ENCODE measurements at regions of chr1 and their contacts with region 1.

Region 1: DNA sequence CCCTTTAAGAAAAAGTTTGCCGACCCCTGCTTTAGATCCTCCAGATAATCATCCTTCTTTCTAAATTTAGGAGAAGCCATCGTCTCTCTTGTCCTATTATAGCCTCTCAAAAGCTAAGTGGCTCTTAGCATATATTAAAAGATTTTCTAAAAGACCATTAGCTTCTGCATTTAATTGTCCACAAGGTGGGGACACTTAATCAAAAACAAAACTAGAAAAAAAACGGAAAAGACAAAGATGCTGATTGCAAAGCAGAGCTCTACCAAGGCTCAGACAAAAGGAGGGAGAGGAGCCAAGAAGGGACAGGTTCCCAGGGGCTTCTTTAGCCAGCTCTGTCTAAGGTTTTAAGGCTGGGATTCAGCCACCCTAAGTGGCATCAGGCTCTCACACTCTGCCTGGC is 128.3 kb upstream of the HMGB4 start:
- DNase-seq: no peak
- H3K4me3 ChIP-seq: no peak overlapping the region
- H3K27me3 ChIP-seq: no peaks in the 10 kb centered on the region
- CTCF ChIP-seq: peak; percentile 44

Region 2: DNA sequence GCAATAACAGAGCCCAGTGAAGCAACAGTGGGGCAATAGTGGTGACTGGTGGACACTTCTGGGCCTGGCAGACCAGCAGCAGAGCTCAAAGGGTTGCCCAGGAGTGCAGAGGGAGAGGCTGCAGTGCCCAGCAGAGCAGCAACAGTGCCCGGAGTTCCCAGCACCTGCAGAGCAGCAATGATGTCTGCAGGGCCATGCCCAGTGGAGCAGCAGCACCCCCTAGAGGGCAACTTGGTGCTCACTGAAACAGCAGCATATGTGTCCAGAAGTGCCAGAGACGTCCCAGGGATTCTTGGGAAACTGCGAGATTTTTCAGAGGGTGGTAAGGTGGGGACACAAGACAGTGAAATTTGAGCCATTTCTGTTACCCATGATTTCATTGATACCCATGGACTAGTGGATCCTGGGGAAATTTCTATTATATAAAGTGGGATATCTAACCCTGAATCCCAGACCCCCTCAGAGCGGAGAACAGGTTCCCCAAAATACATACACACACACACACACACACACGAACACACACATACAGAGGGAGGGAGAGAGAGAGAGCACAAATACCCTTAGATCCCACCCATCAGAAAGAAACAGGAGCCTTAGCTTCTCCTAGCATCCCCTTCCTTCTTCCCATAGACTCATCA is 862.4 kb after region 1 on chr1:
- CTCF ChIA-PET with region 1: interaction called, 10 read pairs
- POLR2A ChIA-PET with region 1: no interaction called
- DNase-seq: no peak
- H3K4me3 ChIP-seq: no peak overlapping the region
- H3K27me3 ChIP-seq: no peaks in the 10 kb centered on the region
- CTCF ChIP-seq: peak; percentile 90

Measured in BJ (cell line).